H1 (cell line): ENCODE measurements at regions of chr4 and their contacts with region 1.

Region 1: GRCh38 chr4:48085821-48086607 is 48.0 kb downstream of the TXK start:
- DNase-seq: no peak
- H3K4me3 ChIP-seq: no peak overlapping the region
- H3K27ac ChIP-seq: no peak overlapping the region
- H3K4me1 ChIP-seq: no peaks in the 10 kb centered on the region
- H3K27me3 ChIP-seq: no peaks in the 10 kb centered on the region
- CTCF ChIP-seq: no peak
- EP300 ChIP-seq: no peak
- POLR2A ChIP-seq: no peak
- RAD21 ChIP-seq: no peak

Region 2: GRCh38 chr4:47933840-47934239 is 152.2 kb before region 1 on chr4:
- CTCF ChIA-PET with region 1: interaction called, 10 read pairs
- POLR2A ChIA-PET with region 1: no interaction called
- DNase-seq: no peak
- H3K4me3 ChIP-seq: no peak overlapping the region
- H3K27ac ChIP-seq: no peak overlapping the region
- H3K4me1 ChIP-seq: no peaks in the 10 kb centered on the region
- H3K27me3 ChIP-seq: no peaks in the 10 kb centered on the region
- CTCF ChIP-seq: peak in 2 of 3 experiments; percentile 47 to 49; a peak in 2 of 4 replicates
- EP300 ChIP-seq: no peak
- POLR2A ChIP-seq: no peak
- RAD21 ChIP-seq: peak; percentile 72 to 75

Region 3: DNA sequence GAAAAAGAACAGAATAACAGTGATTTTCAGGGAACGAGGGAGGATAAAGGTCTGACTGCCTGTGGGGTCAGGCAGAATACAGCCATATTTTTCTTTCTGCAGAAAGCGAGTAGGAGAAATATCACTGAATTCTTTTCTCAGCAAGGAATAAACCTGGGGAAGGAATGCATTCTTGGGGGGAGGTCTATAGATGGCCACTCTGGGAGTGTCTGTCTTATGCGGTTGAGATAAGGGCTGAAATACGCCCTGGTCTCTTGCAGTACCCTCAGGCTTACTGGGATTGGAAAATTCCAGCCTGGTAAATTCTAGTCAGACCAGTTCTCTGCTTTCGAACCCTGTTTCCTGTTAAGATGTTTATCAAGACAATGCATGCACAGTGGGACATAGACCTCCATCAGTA is 95.9 kb before region 1 on chr4:
- CTCF ChIA-PET with region 1: no interaction called
- POLR2A ChIA-PET with region 1: no interaction called
- DNase-seq: no peak
- H3K4me3 ChIP-seq: no peak overlapping the region
- H3K27ac ChIP-seq: no peak overlapping the region
- H3K4me1 ChIP-seq: no peaks in the 10 kb centered on the region
- H3K27me3 ChIP-seq: no peaks in the 10 kb centered on the region
- CTCF ChIP-seq: no peak
- EP300 ChIP-seq: peak in 1 of 2 experiments; percentile 95; a peak in 1 of 3 replicates
- POLR2A ChIP-seq: no peak
- RAD21 ChIP-seq: no peak

Region 4: DNA sequence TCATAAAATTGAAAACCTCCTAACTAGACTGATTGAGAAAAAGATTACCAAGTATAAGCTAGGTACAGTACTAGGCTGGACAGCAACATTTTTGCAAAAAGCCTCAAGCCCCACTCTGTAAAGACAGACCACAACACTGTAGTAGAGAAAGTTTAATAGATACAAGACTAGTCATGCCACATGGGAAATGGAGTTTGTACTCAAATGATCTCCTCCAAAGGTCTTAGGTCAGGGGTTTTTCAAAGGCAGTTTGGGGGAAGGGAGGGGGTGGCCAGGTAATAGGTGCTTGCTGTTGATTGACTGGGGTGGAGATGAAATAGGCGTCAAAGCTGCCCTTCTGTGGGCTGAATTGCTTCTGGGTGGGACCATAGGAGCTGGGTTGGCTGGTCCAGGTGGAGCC is 83.7 kb before region 1 on chr4:
- CTCF ChIA-PET with region 1: interaction called, 21 read pairs
- POLR2A ChIA-PET with region 1: no interaction called
- DNase-seq: no peak
- H3K4me3 ChIP-seq: no peak overlapping the region
- H3K27ac ChIP-seq: no peak overlapping the region
- H3K4me1 ChIP-seq: no peaks in the 10 kb centered on the region
- H3K27me3 ChIP-seq: no peaks in the 10 kb centered on the region
- CTCF ChIP-seq: no peak
- EP300 ChIP-seq: no peak
- POLR2A ChIP-seq: no peak
- RAD21 ChIP-seq: no peak

Region 5: DNA sequence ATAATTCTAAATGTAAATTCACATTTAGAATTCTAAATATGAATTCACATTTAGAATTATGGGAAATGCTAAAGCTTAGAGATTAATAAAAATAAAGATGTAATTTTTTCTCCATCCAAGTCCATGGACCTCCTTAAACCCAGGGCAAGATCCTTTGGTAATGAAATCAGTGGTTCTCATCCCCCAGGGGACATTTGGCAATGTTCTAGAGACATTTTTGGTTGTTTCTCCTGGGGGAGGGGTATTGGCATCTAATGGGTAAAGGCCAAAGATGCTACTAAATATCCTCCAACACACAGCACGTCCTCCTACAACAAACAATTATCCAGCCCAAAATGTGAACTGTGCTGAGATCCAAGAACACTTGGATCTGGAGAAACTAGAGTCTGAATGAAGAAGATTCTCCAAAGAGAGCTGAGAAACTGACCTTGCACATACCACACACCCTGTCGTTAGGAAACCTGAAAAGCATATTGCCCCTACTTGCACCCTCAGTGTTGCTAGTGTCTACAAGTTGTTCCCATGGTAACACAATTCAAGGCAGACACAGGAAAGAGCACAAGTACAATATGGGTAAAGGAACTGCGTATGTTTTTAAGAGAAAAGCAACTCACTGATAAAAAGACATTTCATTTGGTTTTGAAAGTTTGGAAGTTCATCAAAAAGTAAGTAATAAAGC is 27.6 kb before region 1 on chr4:
- CTCF ChIA-PET with region 1: no interaction called
- POLR2A ChIA-PET with region 1: no interaction called
- DNase-seq: no peak
- H3K4me3 ChIP-seq: no peak overlapping the region
- H3K27ac ChIP-seq: no peak overlapping the region
- H3K4me1 ChIP-seq: no peaks in the 10 kb centered on the region
- H3K27me3 ChIP-seq: no peaks in the 10 kb centered on the region
- CTCF ChIP-seq: no peak
- EP300 ChIP-seq: no peak
- POLR2A ChIP-seq: no peak
- RAD21 ChIP-seq: no peak

Region 6: GRCh38 chr4:48071121-48071612 is 14.8 kb before region 1 on chr4:
- CTCF ChIA-PET with region 1: interaction called, 11 read pairs
- POLR2A ChIA-PET with region 1: no interaction called
- DNase-seq: no peak
- H3K4me3 ChIP-seq: no peak overlapping the region
- H3K27ac ChIP-seq: no peak overlapping the region
- H3K4me1 ChIP-seq: no peaks in the 10 kb centered on the region
- H3K27me3 ChIP-seq: no peaks in the 10 kb centered on the region
- CTCF ChIP-seq: no peak
- EP300 ChIP-seq: no peak
- POLR2A ChIP-seq: no peak
- RAD21 ChIP-seq: no peak

Region 7: DNA sequence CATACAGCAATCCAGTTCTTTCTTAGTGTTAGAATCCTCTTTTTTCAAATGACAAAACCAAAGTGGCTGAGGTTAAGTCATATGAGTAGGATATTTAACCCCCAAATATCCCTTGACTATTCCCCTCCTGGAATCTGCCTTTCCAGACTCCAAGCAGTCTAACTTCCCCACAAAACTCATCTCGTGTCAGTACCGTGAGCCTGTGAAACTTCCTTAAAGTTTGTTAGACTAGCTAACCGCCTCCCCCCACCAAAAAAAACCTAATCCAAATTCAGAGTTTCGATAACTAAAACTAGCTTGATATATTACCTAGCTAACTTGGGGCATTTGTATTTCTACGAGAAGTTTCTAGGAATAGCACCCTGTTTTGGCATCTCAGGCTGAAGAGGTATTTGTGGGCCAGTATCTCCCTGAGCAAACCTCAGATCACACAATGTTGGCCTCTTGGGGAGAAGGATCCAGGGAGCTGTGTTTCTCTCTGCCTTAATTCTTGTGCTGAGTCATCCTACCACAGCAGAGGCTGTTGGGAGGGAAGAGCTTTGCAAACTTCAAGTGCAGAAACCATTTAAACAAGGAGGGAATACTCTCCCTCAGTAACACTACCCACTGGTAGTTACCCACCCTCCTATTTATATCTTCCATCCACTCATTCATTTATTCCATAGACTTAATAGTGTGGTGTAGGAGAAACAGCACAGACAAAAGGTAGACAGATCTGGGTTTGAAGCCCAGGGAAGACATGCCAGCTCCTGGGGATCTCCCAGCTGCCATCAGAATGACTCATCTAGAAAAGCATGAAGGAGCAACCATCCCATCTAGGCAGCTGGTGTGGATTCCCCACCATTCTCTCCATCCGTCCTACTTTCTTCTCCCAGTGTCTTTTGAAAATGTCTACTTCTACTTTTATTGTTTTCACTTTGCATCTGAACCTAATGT is 87.3 kb after region 1 on chr4:
- CTCF ChIA-PET with region 1: no interaction called
- POLR2A ChIA-PET with region 1: no interaction called
- DNase-seq: no peak
- H3K4me3 ChIP-seq: no peak overlapping the region
- H3K27ac ChIP-seq: no peak overlapping the region
- H3K4me1 ChIP-seq: peaks cover 0 to 2% (median 0%) of the 10 kb centered on the region in 4 experiments; a peak in 1 of 7 replicates
- H3K27me3 ChIP-seq: no peaks in the 10 kb centered on the region
- CTCF ChIP-seq: no peak
- EP300 ChIP-seq: no peak
- POLR2A ChIP-seq: no peak
- RAD21 ChIP-seq: no peak